ENCODE measurements at regions of chr7 and their contacts with region 1.

Region 1: DNA sequence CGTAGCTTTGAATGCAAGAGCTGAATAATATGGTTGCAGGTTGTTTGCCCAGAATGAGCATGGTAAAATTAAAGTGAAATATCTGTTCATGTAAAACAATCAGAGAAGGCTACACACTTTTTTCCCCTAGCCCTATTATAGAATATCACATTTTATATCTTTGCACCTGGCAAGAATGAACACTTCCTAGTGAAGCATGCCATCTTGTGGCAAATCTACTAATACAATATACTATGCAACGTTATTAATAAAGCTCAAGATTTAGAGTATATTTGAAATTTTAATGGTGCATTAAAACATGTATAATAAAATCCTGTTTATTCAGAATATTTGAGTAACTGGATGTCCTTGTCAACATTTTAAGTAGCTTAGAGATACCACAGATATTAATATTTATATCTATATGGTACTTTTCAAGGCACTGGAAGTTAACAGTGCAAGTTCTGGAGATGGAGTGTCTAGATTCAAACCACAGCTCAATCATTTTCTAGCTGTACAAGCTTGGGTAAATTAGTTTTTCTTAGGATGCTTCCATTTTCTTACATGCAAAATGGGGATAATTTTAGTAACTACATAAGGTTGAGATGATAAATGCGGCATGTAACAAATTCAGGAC is 643.1 kb upstream of the SEMA3D start:
- DNase-seq: peak; percentile 19
- H3K4me3 ChIP-seq: no peak overlapping the region
- H3K27ac ChIP-seq: no peak overlapping the region
- H3K4me1 ChIP-seq: peaks cover 0 to 2% of the 10 kb centered on the region in 2 experiments; a peak in 1 of 4 replicates
- H3K27me3 ChIP-seq: no peaks in the 10 kb centered on the region
- CTCF ChIP-seq: peak; percentile 88
- EP300 ChIP-seq: no peak
- RAD21 ChIP-seq: peak; percentile 88

Region 2: DNA sequence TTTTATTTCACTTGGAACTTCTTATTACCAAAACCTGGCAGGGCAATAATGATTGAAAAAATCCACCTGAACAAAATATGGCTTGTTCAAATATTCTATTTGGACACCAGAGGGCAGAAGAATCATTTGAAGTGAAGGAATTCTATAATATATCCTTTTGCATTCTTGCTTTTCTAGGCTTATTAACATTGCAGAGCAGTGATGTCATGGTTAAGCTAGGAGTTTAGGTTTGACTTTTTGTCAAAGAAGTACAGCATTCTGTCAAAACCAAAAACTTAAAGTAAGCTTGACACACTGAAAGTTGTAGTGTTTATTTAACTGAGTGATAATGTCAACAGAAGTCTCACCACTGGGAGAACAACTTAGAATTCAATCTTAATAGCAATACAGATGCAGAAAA is 799.0 kb before region 1 on chr7:
- CTCF ChIA-PET with region 1: interaction called, 98 read pairs
- POLR2A ChIA-PET with region 1: no interaction called
- DNase-seq: peak; percentile 1
- H3K4me3 ChIP-seq: no peak overlapping the region
- H3K27ac ChIP-seq: no peak overlapping the region
- H3K4me1 ChIP-seq: peaks cover 0 to 5% of the 10 kb centered on the region in 2 experiments; a peak in 2 of 4 replicates
- H3K27me3 ChIP-seq: no peaks in the 10 kb centered on the region
- CTCF ChIP-seq: peak; percentile 95
- EP300 ChIP-seq: no peak
- RAD21 ChIP-seq: peak; percentile 78

Region 3: DNA sequence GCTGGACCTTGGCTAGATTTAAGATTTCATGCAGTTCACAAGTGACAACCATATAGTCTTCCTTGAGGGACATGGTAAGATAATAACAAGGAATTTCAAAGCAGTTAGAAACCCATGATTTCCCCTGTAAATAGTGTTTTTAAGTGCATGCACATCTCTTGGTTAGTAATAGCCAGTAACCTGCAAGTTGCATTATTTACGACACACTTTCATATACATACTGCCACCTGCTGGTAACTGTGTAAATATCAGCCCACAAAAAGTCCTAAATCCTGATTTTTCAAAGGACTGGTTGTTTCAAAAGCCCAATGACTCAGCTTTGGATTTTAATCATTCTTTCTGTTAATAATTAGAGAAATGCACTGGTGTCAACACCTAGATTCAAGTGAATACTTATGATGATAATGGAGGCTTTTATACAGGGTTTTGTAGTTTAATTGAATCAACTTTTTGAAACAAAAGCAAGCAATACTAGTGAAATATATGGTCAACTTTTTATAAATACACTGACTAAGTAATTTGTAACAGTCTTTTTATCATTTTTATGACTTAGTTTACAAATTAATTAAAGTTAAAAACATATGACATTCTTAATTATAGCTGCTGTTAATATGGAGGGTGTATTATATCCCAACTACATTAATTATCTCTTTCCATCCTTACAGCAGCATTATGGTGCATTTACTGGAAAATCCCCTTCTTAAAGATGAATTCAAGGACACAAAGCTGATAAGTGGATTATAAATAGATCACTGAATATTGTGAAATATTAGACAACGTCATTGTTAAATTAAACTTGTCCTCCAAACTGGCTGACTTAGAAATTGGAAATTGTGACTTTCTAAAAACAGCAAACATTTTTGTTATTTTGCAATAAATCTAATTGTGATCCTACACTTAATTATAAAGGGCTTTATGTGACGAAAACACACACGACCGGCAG is 275.4 kb before region 1 on chr7:
- CTCF ChIA-PET with region 1: interaction called, 33 read pairs
- POLR2A ChIA-PET with region 1: no interaction called
- DNase-seq: peak; percentile 19
- H3K4me3 ChIP-seq: no peak overlapping the region
- H3K27ac ChIP-seq: no peak overlapping the region
- H3K4me1 ChIP-seq: no peaks in the 10 kb centered on the region; a peak in 1 of 4 replicates
- H3K27me3 ChIP-seq: no peaks in the 10 kb centered on the region
- CTCF ChIP-seq: peak; percentile 95
- EP300 ChIP-seq: peak in 1 of 2 experiments; percentile 32; a peak in 1 of 4 replicates
- RAD21 ChIP-seq: peak; percentile 93

Region 4: DNA sequence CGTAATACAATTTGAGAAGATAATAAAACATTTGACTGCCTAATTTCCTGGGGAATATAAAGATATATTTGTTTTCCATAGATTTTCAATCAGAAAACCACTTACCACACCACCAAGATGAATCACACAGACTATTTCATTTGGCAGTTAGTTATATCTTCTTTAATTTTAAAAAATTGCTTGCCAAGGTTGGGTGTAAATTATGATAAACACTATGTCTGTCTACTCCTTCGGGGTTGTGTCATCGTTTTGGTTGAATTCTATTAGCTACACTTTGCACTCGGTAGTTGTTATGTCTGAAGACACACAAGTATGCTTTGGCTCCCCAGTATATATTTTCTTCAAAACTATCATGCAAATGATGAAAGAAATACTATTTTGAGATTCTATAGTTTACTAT is 48.3 kb before region 1 on chr7:
- CTCF ChIA-PET with region 1: no interaction called
- POLR2A ChIA-PET with region 1: no interaction called
- DNase-seq: no peak
- H3K4me3 ChIP-seq: no peak overlapping the region
- H3K27ac ChIP-seq: no peak overlapping the region
- H3K4me1 ChIP-seq: no peaks in the 10 kb centered on the region
- H3K27me3 ChIP-seq: no peaks in the 10 kb centered on the region
- CTCF ChIP-seq: no peak
- EP300 ChIP-seq: no peak
- RAD21 ChIP-seq: no peak

Region 5: GRCh38 chr7:85806321-85806720 is 23.6 kb before region 1 on chr7:
- CTCF ChIA-PET with region 1: interaction called, 14 read pairs
- POLR2A ChIA-PET with region 1: no interaction called
- DNase-seq: no peak
- H3K4me3 ChIP-seq: no peak overlapping the region
- H3K27ac ChIP-seq: no peak overlapping the region
- H3K4me1 ChIP-seq: no peaks in the 10 kb centered on the region
- H3K27me3 ChIP-seq: no peaks in the 10 kb centered on the region
- CTCF ChIP-seq: peak; percentile 29; the same call in 1 of the 2 replicates
- EP300 ChIP-seq: no peak
- RAD21 ChIP-seq: no peak

Region 6: DNA sequence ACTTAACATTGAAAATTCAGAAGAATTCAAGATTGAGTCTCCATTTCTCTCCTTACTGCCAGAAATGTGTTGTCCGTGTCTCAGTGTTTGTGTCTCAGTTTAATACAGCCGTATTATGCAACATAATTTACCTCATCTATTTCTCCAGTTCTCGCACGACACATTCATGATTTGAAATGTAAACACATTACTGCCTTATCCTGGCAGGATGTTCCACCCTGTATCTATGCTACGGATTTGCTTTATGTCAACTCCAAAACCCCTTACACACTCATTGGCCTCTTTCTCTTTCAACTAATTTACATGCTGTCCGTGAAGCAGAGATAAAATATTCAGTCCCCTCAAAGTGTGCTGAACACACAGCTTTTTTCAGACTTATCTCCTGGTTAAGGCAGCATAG is 10.6 kb after region 1 on chr7:
- CTCF ChIA-PET with region 1: interaction called, 27 read pairs
- POLR2A ChIA-PET with region 1: no interaction called
- DNase-seq: no peak
- H3K4me3 ChIP-seq: no peak overlapping the region
- H3K27ac ChIP-seq: no peak overlapping the region
- H3K4me1 ChIP-seq: no peaks in the 10 kb centered on the region
- H3K27me3 ChIP-seq: no peaks in the 10 kb centered on the region
- CTCF ChIP-seq: no peak
- EP300 ChIP-seq: no peak
- RAD21 ChIP-seq: no peak

Region 7: GRCh38 chr7:85851571-85852193 is 21.8 kb after region 1 on chr7:
- CTCF ChIA-PET with region 1: interaction called, 15 read pairs
- POLR2A ChIA-PET with region 1: no interaction called
- DNase-seq: peak; percentile 31
- H3K4me3 ChIP-seq: no peak overlapping the region; a peak in 1 of 4 replicates
- H3K27ac ChIP-seq: no peak overlapping the region
- H3K4me1 ChIP-seq: no peaks in the 10 kb centered on the region
- H3K27me3 ChIP-seq: no peaks in the 10 kb centered on the region
- CTCF ChIP-seq: peak; percentile 85
- EP300 ChIP-seq: no peak
- RAD21 ChIP-seq: peak; percentile 82